A673 (cell line): ENCODE measurements at regions of chr13 and their contacts with region 1.

Region 1: DNA sequence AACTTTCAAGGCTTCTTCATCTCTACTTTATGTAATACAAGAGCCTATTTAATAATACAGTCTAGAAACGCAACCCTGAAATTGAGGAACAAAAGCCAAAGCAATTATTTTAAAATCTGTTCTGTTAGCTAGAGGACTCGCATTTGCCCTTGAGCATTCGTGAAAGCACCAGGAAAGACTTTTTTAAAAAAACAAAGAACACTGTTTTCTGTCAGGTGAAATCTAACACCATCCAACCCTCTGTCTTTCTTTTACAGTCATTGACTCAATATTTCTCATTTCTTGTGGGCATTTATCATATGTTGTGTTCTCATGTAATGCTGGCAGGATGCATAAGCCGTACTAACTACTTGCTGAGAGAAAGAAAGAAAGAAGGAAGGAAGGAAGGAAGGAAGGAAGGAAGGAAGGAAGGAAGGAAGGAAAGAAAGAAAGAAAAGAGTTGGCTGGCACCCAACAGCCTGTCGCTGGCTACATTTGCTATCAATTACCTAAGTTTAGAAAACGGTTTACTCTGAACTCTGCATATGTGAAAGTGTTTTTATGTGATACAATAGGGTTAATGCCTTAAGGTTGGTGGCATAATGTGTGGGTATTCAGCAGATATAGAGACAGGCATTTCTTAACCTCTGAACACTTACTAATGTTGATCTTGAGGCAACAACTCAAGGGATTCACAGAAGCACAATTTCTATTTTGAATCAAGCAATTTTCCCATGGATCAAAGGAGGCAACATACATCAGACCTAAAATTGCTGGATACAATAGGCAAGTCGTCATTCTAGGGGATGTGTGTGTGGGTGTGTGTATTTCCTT is 445.4 kb downstream of the DCT start:
- DNase-seq: peak; percentile 97
- H3K4me3 ChIP-seq: no peak overlapping the region
- H3K27ac ChIP-seq: peak overlapping the region; percentile 99
- H3K4me1 ChIP-seq: peaks cover 71% of the 10 kb centered on the region
- H3K27me3 ChIP-seq: no peaks in the 10 kb centered on the region
- CTCF ChIP-seq: no peak

Region 2: DNA sequence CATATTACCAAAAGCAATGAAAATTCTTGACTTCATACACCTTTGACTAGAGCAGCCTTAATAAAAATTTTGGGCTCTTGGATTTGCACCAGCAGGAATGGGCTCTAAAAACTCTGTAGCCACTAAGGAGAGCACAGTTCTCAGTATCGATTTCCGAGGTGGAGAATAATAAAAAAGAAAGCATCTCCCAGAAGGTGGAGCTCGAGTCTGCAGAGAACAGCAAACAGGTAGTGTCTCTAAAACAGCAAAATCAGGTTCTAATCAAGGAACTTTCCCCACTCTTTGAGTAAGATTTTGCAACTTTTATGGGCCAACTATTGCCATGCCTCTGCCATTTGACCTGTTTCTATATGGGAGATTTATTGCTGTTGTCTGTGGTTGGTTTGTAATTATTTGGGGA is 1066.1 kb before region 1 on chr13:
- CTCF ChIA-PET with region 1: no interaction called
- POLR2A ChIA-PET with region 1: no interaction called
- intact Hi-C with region 1: loop called (anchors 10 kb)
- DNase-seq: peak; percentile 42
- H3K4me3 ChIP-seq: no peak overlapping the region
- H3K27ac ChIP-seq: no peak overlapping the region
- H3K4me1 ChIP-seq: no peaks in the 10 kb centered on the region
- H3K27me3 ChIP-seq: no peaks in the 10 kb centered on the region
- CTCF ChIP-seq: peak; percentile 53

Region 3: DNA sequence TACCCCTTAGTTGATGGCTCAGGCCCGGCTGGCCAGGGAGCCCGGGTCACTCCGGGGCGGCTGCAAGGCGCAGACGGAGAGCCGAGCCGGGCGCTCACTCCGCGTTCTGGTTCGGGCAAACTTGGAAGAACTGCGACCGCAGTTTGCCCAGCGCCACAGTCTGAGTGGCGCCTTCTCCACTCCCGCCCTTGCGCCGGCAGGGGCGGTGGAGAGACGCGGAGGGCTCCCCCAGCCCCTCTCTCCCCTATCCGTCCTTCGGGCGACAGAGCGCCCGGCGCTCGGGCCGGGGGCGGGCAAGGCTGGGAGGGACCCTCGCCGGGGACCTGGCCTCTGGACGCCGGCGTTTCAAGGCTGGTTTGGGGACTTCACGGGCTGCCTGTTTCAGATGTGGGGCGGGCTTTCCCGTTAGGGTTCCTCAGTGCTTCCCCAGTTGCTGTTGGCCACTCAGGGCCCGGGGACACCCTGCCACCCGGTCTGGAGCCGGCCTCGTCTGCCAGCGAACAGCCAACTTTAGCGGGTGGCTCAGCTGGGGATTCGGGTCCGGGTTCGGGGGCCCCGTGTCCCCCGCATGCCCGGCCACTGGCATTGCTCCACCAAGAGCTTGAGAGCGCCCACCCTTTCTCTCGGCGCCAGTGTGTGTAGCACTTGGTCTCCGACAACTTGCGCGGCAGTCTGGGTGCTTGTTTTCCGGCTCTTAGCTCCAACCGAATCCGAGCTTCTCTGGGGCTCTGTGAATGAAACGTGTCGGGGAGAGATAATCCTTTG is 806.0 kb before region 1 on chr13:
- CTCF ChIA-PET with region 1: no interaction called
- POLR2A ChIA-PET with region 1: no interaction called
- intact Hi-C with region 1: loop called (anchors 2 kb)
- DNase-seq: peak; percentile 95
- H3K4me3 ChIP-seq: peak overlapping the region; percentile 90
- H3K27ac ChIP-seq: peak overlapping the region; percentile 96
- H3K4me1 ChIP-seq: peaks cover 55% of the 10 kb centered on the region
- H3K27me3 ChIP-seq: no peaks in the 10 kb centered on the region
- CTCF ChIP-seq: peak; percentile 67

Region 4: DNA sequence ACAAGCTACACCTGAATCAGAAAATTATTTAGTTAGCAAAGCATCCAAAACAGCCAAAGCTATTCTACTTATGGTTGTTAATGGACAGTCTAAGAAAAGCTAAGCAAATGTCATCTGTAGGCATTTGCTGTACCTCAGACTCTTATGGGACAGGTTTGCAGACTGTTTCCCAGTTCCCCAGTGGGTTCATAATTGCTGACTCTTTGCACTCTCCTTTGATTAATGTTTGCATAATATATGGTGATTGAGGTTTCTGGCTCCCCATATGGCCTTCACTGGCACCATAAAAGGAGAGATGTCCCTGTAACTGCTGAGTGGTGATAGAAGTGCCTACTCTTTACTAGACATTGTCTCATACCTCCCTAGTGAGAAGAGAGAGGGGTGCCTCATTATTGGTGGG is 665.3 kb before region 1 on chr13:
- CTCF ChIA-PET with region 1: no interaction called
- POLR2A ChIA-PET with region 1: no interaction called
- intact Hi-C with region 1: loop called (anchors 1 kb)
- DNase-seq: peak; percentile 60
- H3K4me3 ChIP-seq: no peak overlapping the region
- H3K27ac ChIP-seq: peak overlapping the region; percentile 76
- H3K4me1 ChIP-seq: peaks cover 49% of the 10 kb centered on the region
- H3K27me3 ChIP-seq: no peaks in the 10 kb centered on the region
- CTCF ChIP-seq: no peak

Region 5: GRCh38 chr13:94121686-94122085 is 87.7 kb after region 1 on chr13:
- CTCF ChIA-PET with region 1: no interaction called
- POLR2A ChIA-PET with region 1: no interaction called
- intact Hi-C with region 1: no loop called
- DNase-seq: peak; percentile 26
- H3K4me3 ChIP-seq: no peak overlapping the region
- H3K27ac ChIP-seq: no peak overlapping the region
- H3K4me1 ChIP-seq: peaks cover 33% of the 10 kb centered on the region
- H3K27me3 ChIP-seq: no peaks in the 10 kb centered on the region
- CTCF ChIP-seq: no peak

Region 6: GRCh38 chr13:94178625-94179244 is 144.7 kb after region 1 on chr13:
- CTCF ChIA-PET with region 1: no interaction called
- POLR2A ChIA-PET with region 1: no interaction called
- intact Hi-C with region 1: no loop called
- DNase-seq: peak; percentile 39
- H3K4me3 ChIP-seq: no peak overlapping the region
- H3K27ac ChIP-seq: no peak overlapping the region
- H3K4me1 ChIP-seq: peaks cover 23% of the 10 kb centered on the region
- H3K27me3 ChIP-seq: no peaks in the 10 kb centered on the region
- CTCF ChIP-seq: no peak

Region 7: DNA sequence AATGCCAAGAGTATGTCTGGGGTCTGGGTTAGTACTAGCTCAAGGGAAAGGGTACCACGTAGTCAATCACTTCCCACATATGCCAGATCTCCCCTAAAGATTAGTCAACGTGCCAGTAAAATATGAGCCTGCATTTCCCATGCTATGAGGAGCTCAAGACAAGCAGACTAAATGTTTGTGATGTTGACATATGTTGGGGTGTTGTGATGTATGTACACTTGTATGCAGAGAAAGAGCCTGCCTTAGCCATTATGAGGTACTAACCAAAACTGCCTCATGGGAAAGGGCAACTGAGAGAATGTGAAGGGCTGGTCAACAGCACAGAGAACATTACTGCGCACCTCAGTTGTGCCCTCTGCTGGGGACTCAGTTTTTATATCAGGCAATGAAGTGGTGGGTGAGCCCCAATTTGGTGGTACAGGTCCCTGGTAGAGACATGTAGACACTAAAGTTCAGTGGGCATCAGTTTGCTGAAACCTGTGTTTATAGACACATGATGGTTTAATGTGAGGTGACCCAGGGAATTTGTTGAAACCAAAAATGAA is 158.5 kb after region 1 on chr13:
- CTCF ChIA-PET with region 1: interaction called, 4 read pairs
- POLR2A ChIA-PET with region 1: interaction called, 3 read pairs
- intact Hi-C with region 1: loop called (anchors 2 kb)
- DNase-seq: peak; percentile 80
- H3K4me3 ChIP-seq: no peak overlapping the region
- H3K27ac ChIP-seq: peak overlapping the region; percentile 54
- H3K4me1 ChIP-seq: peaks cover 49% of the 10 kb centered on the region
- H3K27me3 ChIP-seq: no peaks in the 10 kb centered on the region
- CTCF ChIP-seq: peak; percentile 74

Region 8: DNA sequence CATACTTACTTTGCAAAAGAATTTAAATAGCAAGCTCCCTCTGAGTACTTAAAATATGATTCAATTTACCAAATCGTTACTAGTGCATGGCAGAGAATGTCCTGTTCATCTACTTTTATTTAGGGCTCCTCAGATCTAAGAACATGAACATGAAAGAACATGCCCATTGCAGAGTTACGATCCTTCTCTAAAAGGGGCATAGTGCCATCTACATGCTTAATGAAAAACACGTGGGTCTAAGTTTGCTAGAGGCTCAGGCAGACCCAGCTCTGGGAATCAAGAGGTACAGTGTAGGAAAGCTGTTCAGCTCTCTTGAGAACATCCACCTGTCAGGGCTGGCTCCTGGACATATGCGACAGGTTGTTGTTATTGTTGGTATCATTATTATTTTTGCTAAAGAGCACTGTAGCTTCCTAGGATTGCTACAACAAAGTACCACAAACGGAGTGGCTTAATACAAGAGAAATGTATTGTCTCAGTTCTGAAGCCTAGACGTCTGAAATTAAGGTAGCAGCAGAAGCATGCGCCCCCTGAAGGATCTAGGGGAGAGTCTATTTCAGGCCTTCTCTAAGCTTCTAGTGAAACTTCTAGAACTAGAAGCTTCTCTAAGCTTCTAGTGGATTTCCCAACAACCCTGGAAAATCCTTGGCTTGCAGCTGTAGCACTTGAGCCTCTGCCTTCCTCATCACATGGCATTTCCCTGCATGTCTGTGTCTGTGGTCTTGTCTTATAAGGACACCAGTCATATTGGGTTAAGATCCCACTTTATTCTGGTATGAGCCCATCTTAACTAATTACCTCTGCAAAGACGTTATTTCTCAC is 311.5 kb after region 1 on chr13:
- CTCF ChIA-PET with region 1: no interaction called
- POLR2A ChIA-PET with region 1: no interaction called
- intact Hi-C with region 1: loop called (anchors 5 kb)
- DNase-seq: peak; percentile 87
- H3K4me3 ChIP-seq: no peak overlapping the region
- H3K27ac ChIP-seq: peak overlapping the region; percentile 20
- H3K4me1 ChIP-seq: peaks cover 33% of the 10 kb centered on the region
- H3K27me3 ChIP-seq: no peaks in the 10 kb centered on the region
- CTCF ChIP-seq: peak; percentile 51

Region 9: GRCh38 chr13:95540888-95541287 is 1506.9 kb after region 1 on chr13:
- CTCF ChIA-PET with region 1: no interaction called
- POLR2A ChIA-PET with region 1: no interaction called
- intact Hi-C with region 1: no loop called
- DNase-seq: no peak
- H3K4me3 ChIP-seq: no peak overlapping the region
- H3K27ac ChIP-seq: no peak overlapping the region
- H3K4me1 ChIP-seq: no peaks in the 10 kb centered on the region
- H3K27me3 ChIP-seq: no peaks in the 10 kb centered on the region
- CTCF ChIP-seq: no peak